Ovary (tissue), 10 donors: ENCODE measurements at regions of chr2 and their contacts with region 1.

Region 1: GRCh38 chr2:145572238-145572637 is 1052.3 kb upstream of the ZEB2 start:
- DNase-seq: no peak
- H3K4me3 ChIP-seq: no peak overlapping the region
- H3K27ac ChIP-seq: no peak overlapping the region
- H3K4me1 ChIP-seq: no peaks in the 10 kb centered on the region
- H3K27me3 ChIP-seq: no peaks in the 10 kb centered on the region
- CTCF ChIP-seq: no peak
- EP300 ChIP-seq: no peak
- POLR2A ChIP-seq: no peak

Region 2: DNA sequence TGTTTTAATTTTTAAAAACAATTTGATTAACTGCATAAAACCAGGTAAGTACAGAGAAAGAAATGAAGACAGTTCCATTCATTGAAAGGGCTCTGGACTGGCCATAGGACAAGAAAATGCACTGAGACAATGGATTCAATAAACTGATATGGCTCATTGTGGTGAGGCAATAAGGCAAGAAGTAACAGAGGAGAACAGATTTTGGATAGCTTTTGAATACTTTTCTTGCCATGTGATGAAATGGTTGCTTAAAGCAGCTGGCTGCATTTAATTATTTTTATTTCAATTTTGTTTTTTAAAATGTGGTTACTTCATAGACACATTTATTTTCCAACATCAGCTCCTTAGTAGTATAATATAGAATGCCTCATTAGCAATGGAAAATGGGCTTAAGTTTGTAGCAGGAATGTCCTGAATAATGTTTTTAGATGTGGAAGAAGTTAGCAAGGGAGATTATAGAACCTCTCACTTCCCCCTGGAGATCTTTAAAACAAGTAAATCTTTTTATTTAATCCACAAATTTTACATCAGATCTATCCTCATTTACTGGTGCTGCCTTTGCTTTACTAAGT is 405.4 kb before region 1 on chr2:
- intact Hi-C with region 1: no loop called
- DNase-seq: no peak
- H3K4me3 ChIP-seq: no peak overlapping the region
- H3K27ac ChIP-seq: no peak overlapping the region
- H3K4me1 ChIP-seq: no peaks in the 10 kb centered on the region
- H3K27me3 ChIP-seq: no peaks in the 10 kb centered on the region
- CTCF ChIP-seq: no peak
- EP300 ChIP-seq: no peak
- POLR2A ChIP-seq: no peak

Region 3: GRCh38 chr2:145551686-145552085 is 20.6 kb before region 1 on chr2:
- intact Hi-C with region 1: loop called in 1 of 4 experiments (anchors 1 kb)
- DNase-seq: no peak
- H3K4me3 ChIP-seq: no peak overlapping the region
- H3K27ac ChIP-seq: no peak overlapping the region
- H3K4me1 ChIP-seq: no peaks in the 10 kb centered on the region
- H3K27me3 ChIP-seq: no peaks in the 10 kb centered on the region
- CTCF ChIP-seq: no peak
- EP300 ChIP-seq: no peak
- POLR2A ChIP-seq: no peak

Region 4: GRCh38 chr2:145887915-145888314 is 315.7 kb after region 1 on chr2:
- intact Hi-C with region 1: no loop called
- DNase-seq: no peak
- H3K4me3 ChIP-seq: no peak overlapping the region
- H3K27ac ChIP-seq: no peak overlapping the region
- H3K4me1 ChIP-seq: no peaks in the 10 kb centered on the region
- H3K27me3 ChIP-seq: no peaks in the 10 kb centered on the region
- CTCF ChIP-seq: no peak
- EP300 ChIP-seq: no peak
- POLR2A ChIP-seq: no peak